ENCODE measurements at regions of chr1 and their contacts with region 1.

Region 1: DNA sequence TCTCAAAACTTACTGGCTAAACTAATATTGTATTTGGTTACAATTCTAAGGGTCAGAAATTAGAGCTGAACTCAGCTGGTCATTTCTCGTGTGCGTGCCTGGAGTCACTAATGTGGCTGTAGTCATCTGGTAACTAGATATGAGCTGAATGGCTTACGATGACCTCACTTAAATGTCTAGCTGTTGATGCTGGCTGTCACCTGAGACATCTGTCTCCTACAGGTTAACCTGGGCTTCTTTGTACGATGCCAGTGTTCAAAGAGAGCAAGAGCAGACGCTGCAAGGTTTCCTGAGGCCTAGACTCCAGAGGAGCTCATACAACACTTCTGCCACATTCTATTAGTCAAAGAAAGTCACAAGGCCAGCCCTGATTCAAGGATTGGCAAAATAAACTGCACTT is 17.1 kb upstream of the ALG6 start:
- DNase-seq: no peak
- H3K4me3 ChIP-seq: no peak overlapping the region
- H3K4me3 Mint-ChIP-seq: no peak overlapping the region
- H3K27ac ChIP-seq: no peak overlapping the region
- H3K27ac Mint-ChIP-seq: no peak overlapping the region
- H3K4me1 ChIP-seq: no peaks in the 10 kb centered on the region
- H3K4me1 Mint-ChIP-seq: no peaks in the 10 kb centered on the region
- H3K27me3 ChIP-seq: peaks cover 23 to 36% of the 10 kb centered on the region in 2 donors
- H3K27me3 Mint-ChIP-seq: peaks cover 19 to 32% (median 25%) of the 10 kb centered on the region in 3 donors
- CTCF ChIP-seq: no peak

Region 2: GRCh38 chr1:63294803-63295594 is 55.3 kb before region 1 on chr1:
- intact Hi-C with region 1: loop called in 1 of 2 experiments (anchors 5 kb)
- DNase-seq: no peak
- H3K4me3 ChIP-seq: no peak overlapping the region
- H3K4me3 Mint-ChIP-seq: no peak overlapping the region
- H3K27ac ChIP-seq: no peak overlapping the region
- H3K27ac Mint-ChIP-seq: no peak overlapping the region
- H3K4me1 ChIP-seq: no peaks in the 10 kb centered on the region
- H3K4me1 Mint-ChIP-seq: no peaks in the 10 kb centered on the region
- H3K27me3 ChIP-seq: peaks cover 4% of the 10 kb centered on the region in 2 donors
- H3K27me3 Mint-ChIP-seq: peaks cover 7 to 23% (median 12%) of the 10 kb centered on the region in 3 donors
- CTCF ChIP-seq: no peak

Measured in CD14-positive monocyte (primary cell).